Activated CD8-positive, alpha-beta memory T cell treated with anti-CD3 and anti-CD28 coated beads, Interleukin-2, amount 10 ng/mL, durations not matched to agents 7 days and 5 days (primary cell): ENCODE measurements at regions of chr10 and their contacts with region 1.

Region 1: GRCh38 chr10:44932517-44933450 is 21.6 kb downstream of the TMEM72 start:
- DNase-seq: peak; percentile 89
- ATAC-seq: peak; percentile 96
- H3K4me3 Mint-ChIP-seq: no peak overlapping the region
- H3K27ac Mint-ChIP-seq: no peak overlapping the region
- H3K4me1 Mint-ChIP-seq: peaks cover 13% of the 10 kb centered on the region
- H3K27me3 Mint-ChIP-seq: no peaks in the 10 kb centered on the region

Region 2: DNA sequence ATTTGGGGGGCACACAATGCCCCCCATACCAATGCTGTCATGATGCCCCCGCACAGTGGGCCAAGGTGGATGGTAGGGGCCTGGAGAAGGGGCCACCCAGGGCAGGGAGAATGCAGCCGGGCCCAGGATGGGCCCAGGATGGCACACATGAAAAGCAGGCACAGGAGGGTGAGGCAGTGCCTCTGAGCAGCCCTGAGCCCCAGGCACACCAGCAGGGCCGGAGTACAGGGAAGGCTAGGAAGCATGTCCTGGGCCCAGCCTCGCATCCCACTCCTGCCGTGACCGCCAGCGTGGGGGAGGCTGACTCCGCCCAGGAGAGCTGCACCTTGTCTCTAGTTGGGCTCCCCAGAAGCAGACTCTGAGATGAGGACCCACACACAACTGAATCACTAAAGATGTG is 80.9 kb before region 1 on chr10:
- CTCF ChIA-PET with region 1: no interaction called
- DNase-seq: no peak
- ATAC-seq: no peak
- H3K4me3 Mint-ChIP-seq: no peak overlapping the region
- H3K27ac Mint-ChIP-seq: no peak overlapping the region
- H3K4me1 Mint-ChIP-seq: no peaks in the 10 kb centered on the region
- H3K27me3 Mint-ChIP-seq: no peaks in the 10 kb centered on the region

Region 3: DNA sequence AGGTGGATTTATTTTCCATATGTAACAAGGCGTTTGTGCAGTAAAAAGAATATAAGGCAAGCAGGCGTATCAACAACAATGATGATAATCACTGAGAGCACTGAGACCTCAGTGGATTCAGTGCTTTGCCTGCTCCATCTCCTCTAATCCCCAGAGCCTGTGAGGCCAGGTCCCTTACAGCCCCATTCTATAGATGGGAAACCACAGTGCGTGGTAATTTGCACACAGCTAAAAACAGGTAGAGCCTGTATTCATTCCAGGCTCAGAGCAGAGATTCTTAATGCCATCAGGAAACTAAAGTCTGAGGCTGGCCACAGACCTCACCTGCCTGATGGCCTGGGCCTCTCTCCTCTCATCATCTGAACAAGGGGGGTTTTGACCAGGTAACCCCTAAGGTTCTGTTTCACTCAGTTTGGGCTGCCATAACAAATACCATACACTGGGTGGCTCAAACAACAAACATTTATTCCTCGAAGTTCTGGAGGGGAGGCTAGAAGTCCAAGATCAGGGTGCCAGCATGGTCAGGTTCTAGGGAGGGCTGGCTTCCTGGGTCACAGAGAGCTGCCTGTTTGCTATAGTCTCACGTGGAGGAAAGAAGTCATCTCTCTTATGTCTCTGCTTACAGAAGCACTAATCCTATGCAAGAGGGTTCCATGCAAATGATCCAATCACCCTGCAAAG is 16.5 kb after region 1 on chr10:
- CTCF ChIA-PET with region 1: interaction called, 22 read pairs
- DNase-seq: peak; percentile 12
- ATAC-seq: no peak
- H3K4me3 Mint-ChIP-seq: no peak overlapping the region
- H3K27ac Mint-ChIP-seq: no peak overlapping the region
- H3K4me1 Mint-ChIP-seq: no peaks in the 10 kb centered on the region
- H3K27me3 Mint-ChIP-seq: peaks cover 7% of the 10 kb centered on the region

Region 4: DNA sequence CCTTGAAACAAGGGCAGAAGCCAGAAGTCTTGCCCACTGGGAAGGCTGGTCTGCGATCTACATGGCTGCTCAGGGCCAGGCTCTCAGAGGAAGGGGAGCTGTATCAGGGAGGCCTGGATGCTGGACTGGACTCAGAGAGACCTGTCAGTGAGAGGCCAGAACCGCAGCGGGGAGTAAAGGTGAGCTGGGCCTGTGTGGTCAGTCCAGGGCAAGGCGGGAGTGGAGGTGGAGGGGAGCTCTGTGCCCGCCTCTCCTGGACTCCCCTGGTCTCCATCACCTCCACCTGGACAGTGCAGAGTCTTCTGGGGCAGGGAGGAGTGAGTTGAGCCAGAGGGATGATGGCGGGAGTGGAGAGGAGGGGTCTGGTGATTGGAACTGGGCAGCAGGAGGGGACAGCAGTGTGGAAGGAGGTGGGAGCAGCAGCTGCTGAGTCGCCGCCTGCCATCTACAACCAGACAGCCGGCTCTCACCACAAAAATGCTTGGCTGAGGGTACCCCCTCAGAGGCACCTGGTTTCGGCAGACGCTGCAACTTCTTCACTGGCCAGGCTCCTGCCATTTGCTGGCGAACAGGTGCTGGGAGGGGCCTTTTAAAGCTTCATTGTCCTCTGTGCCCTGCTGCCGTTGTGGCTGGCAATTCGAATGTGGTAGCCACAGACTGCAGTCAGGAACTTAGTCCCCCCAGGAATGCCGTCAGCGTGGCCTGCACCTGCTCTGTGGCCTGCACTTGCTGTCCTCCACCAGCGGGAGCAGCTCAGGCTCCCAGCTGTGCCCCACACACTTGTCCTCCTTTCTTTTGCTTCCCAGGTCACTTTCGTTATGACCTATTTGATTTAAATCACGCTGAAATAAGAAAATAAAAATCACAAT is 30.3 kb after region 1 on chr10:
- CTCF ChIA-PET with region 1: interaction called, 38 read pairs
- DNase-seq: no peak
- ATAC-seq: no peak
- H3K4me3 Mint-ChIP-seq: no peak overlapping the region
- H3K27ac Mint-ChIP-seq: no peak overlapping the region
- H3K4me1 Mint-ChIP-seq: peaks cover 27% of the 10 kb centered on the region
- H3K27me3 Mint-ChIP-seq: no peaks in the 10 kb centered on the region

Region 5: GRCh38 chr10:44974628-44975431 is 42.0 kb after region 1 on chr10:
- CTCF ChIA-PET with region 1: interaction called, 38 read pairs
- DNase-seq: peak; percentile 74
- ATAC-seq: peak; percentile 98
- H3K4me3 Mint-ChIP-seq: peak overlapping the region; percentile 62
- H3K27ac Mint-ChIP-seq: peak overlapping the region; percentile 79
- H3K4me1 Mint-ChIP-seq: peaks cover 13% of the 10 kb centered on the region
- H3K27me3 Mint-ChIP-seq: no peaks in the 10 kb centered on the region

Region 6: GRCh38 chr10:44986670-44987069 is 53.9 kb after region 1 on chr10:
- CTCF ChIA-PET with region 1: interaction called, 12 read pairs
- DNase-seq: no peak
- ATAC-seq: no peak
- H3K4me3 Mint-ChIP-seq: no peak overlapping the region
- H3K27ac Mint-ChIP-seq: no peak overlapping the region
- H3K4me1 Mint-ChIP-seq: no peaks in the 10 kb centered on the region
- H3K27me3 Mint-ChIP-seq: peaks cover 15% of the 10 kb centered on the region